Activated T-helper 1 cell treated with anti-CD3 and anti-CD28 coated beads, Interleukin-12 subunit alpha, Interleukin-12 subunit beta, Interleukin-2, Interleukin-4 antibody, amounts not matched to agents 30 ng/mL and 10 ng/mL and 1 ng/mL, durations not matched to agents 14 hours and 24 hours and 36 hours (primary cell): ENCODE measurements at regions of chr11 and their contacts with region 1.

Region 1: GRCh38 chr11:125494974-125495725 is 915 bp downstream of the FEZ1 start:
- DNase-seq: no peak
- H3K4me3 Mint-ChIP-seq: peak overlapping the region; percentile 90
- H3K27ac Mint-ChIP-seq: peak overlapping the region; percentile 19
- H3K4me1 Mint-ChIP-seq: peaks cover 31% of the 10 kb centered on the region
- H3K27me3 Mint-ChIP-seq: peaks cover 55% of the 10 kb centered on the region

Region 2: GRCh38 chr11:125514336-125515101 is 19.4 kb after region 1 on chr11:
- intact Hi-C with region 1: loop called (anchors 2 kb)
- DNase-seq: peak; percentile 55
- H3K4me3 Mint-ChIP-seq: peak overlapping the region; percentile 8
- H3K27ac Mint-ChIP-seq: peak overlapping the region; percentile 83
- H3K4me1 Mint-ChIP-seq: peaks cover 57% of the 10 kb centered on the region
- H3K27me3 Mint-ChIP-seq: no peaks in the 10 kb centered on the region